Right ventricle myocardium inferior (tissue), 1 donor: ENCODE measurements at regions of chr5 and their contacts with region 1.

Region 1: GRCh38 chr5:96662725-96663513 is 743 bp downstream of the CAST start:
- DNase-seq: peak; percentile 97
- ATAC-seq: peak; percentile 93

Region 2: GRCh38 chr5:96548947-96549346 is 114.0 kb before region 1 on chr5:
- intact Hi-C with region 1: no loop called
- DNase-seq: no peak
- ATAC-seq: no peak

Region 3: DNA sequence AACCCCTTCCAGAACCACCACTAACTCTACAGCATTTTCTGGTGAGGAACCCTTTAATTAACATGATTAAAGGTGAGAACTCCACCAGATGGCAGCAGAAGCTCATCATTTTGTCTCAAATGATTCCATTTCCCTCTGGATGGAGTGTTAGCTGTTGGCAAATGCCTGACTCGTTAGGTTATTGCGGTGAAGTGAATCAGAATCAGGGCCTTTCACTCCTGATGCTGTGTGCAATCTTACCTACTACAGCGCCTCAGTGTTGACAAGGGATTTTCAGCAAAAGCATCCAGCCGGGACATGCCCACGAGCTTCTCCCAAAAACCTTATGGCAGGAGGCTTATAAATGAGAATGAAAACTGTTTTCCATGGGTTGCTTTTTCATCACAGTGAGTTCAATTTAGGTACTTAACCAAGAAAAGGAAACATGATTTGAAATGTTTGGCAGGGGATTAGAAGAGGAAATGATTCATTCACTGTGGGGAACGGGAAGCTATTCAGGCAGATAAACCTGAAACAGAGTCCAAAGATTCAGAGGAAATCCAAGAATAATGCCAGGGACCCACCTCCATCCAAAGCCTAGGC is 48.7 kb before region 1 on chr5:
- intact Hi-C with region 1: loop called (anchors 10 kb)
- DNase-seq: no peak
- ATAC-seq: peak; percentile 79

Region 4: GRCh38 chr5:96702503-96703383 is 39.8 kb after region 1 on chr5:
- intact Hi-C with region 1: loop called (anchors 2 kb)
- DNase-seq: peak; percentile 96
- ATAC-seq: peak; percentile 98

Region 5: GRCh38 chr5:96743065-96743768 is 80.3 kb after region 1 on chr5:
- intact Hi-C with region 1: loop called (anchors 5 kb)
- DNase-seq: no peak
- ATAC-seq: no peak

Region 6: DNA sequence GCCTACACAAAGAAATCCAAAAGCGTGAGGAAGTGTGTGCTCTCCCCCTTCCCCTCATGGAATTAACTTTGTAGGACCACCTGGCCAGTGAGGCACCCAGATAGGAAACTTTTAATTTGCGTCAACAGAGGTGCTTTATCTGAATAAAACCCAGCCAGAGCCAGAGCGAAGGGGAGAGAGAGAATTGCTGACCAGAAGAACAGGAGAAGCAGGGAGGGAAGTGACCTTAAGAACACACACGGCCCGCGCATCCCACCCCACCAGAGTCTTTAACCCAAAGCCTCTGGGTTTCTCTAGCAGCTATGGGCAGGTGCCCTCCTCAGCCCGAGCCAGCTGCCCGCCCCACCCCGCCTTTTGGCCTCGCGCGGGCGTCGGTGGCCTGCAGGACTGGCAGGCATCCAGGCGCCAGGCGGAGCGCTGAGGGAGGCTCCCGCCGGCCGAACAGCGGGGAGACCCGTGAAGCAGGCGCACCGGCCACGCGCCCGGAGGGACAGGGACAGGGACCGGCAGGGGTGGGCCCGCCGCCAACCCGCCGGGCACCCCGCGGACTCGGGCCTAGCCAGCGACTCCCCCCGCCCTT is 144.2 kb after region 1 on chr5:
- intact Hi-C with region 1: loop called (anchors 2 kb)
- DNase-seq: peak; percentile 90
- ATAC-seq: peak; percentile 77

Region 7: DNA sequence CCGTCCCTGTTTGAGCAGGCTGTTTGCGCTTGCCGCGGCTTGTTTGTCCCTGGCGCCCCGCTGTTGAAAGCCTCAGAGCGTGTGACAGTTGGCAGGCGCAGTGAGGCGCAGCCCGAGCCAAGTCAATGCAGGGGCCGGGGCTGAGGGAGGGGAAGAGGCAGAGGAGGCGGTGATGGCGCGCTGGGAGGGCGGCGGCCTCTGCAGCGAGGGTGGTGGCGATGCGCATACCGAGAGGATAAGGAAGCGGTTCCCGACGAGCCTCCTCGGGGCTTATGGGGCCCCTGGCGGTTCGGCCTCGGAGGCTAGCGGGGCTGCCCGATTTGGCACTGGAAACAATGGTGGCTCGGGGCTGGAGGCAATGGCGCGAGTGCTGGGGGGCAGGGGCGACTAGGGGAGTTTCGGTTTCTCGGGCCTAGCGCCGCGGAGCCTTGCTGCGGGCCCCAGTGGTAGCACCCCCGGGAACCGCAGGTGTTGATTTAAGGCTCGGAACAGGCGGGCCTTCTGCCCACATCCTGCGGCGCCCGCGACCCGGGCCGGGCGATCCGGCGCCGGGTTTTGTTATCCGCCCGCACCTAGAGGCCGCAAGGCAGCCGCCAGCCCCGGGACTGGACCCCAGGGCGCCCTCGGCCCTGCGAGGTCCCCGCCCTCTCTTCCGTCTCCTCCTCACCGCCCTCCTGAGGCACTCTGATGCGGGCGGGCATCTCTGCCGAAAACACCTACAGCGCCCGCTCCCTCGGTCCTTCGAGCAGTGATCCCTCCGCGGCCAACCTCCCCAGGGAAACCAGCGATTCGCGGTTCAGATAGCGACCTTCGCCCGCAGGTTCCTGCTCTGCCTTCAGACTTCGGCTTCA is 272.0 kb after region 1 on chr5:
- intact Hi-C with region 1: loop called (anchors 5 kb)
- DNase-seq: peak; percentile 97
- ATAC-seq: peak; percentile 90

Region 8: GRCh38 chr5:97019435-97020117 is 356.7 kb after region 1 on chr5:
- intact Hi-C with region 1: no loop called
- DNase-seq: no peak
- ATAC-seq: no peak